GM10248 (cell line): ENCODE measurements at regions of chr11 and their contacts with region 1.

Region 1: DNA sequence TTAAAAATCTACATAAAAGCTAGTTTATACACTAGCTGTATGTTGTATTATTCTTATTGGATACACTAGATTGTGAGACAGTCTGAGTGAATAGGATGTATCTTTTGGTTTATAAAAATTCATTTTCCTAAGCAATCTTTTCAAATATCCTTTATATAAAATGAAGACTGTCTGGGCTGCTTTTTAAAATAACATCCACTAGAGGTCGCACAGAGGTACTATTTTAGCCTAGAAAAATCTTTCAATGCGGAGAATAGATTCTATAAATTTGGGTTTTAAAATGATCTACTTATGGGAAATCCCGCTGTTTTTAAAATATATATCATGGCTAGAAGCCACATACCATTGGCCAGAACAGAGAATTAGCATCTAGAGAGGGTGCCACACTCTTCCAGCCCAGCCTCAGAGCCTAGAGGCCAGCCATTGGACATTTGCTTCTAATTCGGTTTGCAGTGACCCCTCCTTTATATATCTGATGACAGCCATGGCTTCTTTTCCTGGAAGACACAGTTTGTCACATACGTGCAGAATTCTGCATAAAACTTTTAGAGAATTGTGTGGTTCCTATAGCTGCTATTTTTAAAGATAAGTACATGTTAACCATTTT is 7.3 kb downstream of the C11orf97 start:
- DNase-seq: peak; percentile 34
- CTCF ChIP-seq: peak; percentile 49

Region 2: DNA sequence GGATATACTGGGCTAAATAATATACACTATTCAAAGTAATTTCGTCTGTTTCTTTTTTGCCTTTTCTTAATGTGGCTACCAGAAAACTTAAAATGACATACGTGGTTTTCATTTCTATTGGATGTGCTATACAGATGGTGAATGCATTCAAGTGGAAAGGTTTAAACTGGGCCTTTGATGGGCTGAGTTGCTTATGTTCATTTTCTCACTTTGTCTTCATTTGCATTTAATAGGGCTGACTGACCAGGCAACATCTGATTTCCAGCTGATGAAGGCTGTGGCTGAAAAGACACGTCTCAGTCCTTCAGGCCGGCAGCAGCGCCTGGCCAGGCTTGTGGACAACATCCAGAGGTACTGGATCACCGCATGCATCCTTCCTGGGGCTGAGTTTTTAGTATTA is 75.5 kb after region 1 on chr11:
- CTCF ChIA-PET with region 1: interaction called, 12 read pairs
- POLR2A ChIA-PET with region 1: no interaction called
- DNase-seq: peak; percentile 33
- CTCF ChIP-seq: no peak

Region 3: GRCh38 chr11:94602430-94603372 is 83.1 kb after region 1 on chr11:
- CTCF ChIA-PET with region 1: interaction called, 15 read pairs
- POLR2A ChIA-PET with region 1: no interaction called
- DNase-seq: peak; percentile 52
- CTCF ChIP-seq: peak; percentile 37

Region 4: GRCh38 chr11:96134602-96135001 is 1615.0 kb after region 1 on chr11:
- CTCF ChIA-PET with region 1: no interaction called
- POLR2A ChIA-PET with region 1: no interaction called
- DNase-seq: no peak
- CTCF ChIP-seq: no peak